ENCODE measurements at regions of chr20 and their contacts with region 1.

Region 1: DNA sequence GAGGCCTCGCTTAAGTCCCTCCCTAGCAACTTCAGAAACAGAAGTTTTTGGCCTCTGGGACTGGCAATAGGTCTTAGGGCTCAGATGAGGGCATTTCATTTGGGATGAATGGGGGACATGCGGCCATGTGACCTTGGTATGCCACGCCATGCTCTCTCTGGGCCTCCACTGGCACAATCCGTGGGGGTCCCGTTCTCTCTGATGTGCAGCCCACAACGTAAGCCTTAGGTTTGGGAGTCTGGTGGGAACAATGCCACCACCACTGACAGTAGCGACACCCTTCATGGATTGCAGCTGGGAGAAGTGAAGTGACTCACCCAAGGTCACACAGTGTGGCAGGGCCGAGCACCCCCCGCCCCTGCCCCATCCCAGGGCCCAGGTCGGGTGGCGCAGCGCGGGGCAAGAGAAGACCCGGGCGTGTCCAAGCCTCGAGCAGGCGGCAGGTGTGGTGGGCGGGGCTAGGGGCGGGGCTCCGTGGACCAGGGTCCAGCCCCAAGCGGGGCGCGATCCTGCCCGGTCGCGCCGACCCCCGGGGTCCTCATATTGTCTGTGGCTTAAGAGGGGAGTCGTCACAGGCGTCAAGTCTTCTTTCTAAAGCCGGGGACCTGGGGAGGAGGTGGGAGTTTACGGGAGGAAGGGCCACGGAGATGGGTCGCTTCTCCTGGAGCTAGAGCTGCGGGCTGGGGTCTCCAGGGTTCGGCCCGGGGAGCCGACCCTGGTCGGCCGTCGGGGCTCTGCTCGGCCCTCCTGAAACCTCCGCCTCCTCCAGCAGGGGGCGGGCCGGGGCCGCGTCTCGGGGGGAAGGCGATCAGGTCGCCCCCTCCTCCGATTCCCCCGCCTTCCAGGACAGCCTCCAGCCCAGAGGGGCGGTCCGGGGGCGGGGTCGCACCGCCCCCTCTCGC is 698 bp upstream of the CEBPB start:
- DNase-seq: peak; percentile 97
- H3K4me3 ChIP-seq: peak overlapping the region; percentile 79 to 91 (median 86)
- H3K27ac ChIP-seq: peak overlapping the region; percentile 93 to 100 (median 98)
- H3K4me1 ChIP-seq: peaks cover 0 to 40% (median 31%) of the 10 kb centered on the region in 4 donors
- H3K27me3 ChIP-seq: no peaks in the 10 kb centered on the region
- CTCF ChIP-seq: peak; percentile 68 to 89 (median 78)
- EP300 ChIP-seq: peak in 1 of 4 donors; percentile 5
- POLR2A ChIP-seq: no peak

Region 2: DNA sequence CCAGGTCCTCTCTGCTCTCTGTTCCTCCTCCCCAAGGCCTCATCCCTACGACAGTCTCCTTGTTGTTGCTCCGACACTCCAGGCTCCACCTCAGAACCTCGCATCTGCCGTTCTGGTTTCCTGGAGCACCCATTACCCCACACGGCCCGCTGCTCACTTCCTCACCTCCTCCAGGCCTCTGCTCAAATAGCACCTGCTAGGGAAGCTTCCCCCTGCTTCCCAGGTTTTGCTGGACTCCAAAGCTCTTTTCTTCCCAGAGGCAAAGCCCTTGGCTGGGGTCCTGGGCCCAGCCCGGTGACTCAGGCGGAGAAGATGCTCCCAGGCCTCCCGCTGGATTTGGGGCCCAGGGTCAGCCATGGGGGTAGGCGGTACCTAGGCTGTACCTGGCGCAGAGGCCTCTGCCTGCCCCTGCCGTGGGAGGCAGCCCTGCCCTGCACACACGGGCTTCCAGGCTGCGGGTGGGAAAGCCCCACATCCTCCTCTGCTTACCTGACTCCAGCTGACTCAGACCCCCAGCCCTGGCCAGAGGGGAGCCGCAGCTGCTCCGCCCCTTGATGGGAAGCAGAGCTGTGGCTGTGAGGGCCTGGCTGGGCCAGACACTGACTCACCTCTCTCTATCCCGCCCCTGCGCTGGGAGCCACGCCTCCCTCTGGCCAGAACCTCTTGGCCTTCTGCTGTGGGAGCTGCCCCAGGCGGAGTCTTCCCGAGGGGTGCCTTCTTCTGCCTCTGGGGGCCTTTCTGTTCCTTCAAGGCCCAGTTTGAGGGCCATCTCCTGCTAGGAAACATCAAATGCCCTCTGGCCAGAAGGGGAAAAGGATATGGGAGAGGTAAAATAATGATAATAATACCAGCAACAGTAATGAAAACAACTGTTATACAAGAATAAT is 131.2 kb after region 1 on chr20:
- intact Hi-C with region 1: loop called (anchors 5 kb)
- DNase-seq: peak; percentile 98
- H3K4me3 ChIP-seq: peak overlapping the region; percentile 13 to 48 (median 36)
- H3K27ac ChIP-seq: peak overlapping the region; percentile 77 to 92 (median 84)
- H3K4me1 ChIP-seq: peaks cover 0 to 25% (median 21%) of the 10 kb centered on the region in 4 donors
- H3K27me3 ChIP-seq: no peaks in the 10 kb centered on the region
- CTCF ChIP-seq: no peak
- EP300 ChIP-seq: peak in 1 of 4 donors; percentile 59
- POLR2A ChIP-seq: peak; percentile 33 to 76

Region 3: GRCh38 chr20:50415516-50416113 is 225.7 kb after region 1 on chr20:
- intact Hi-C with region 1: loop called (anchors 1 kb)
- DNase-seq: peak; percentile 100
- H3K4me3 ChIP-seq: peak overlapping the region in 1 of 4 donors; percentile 3
- H3K27ac ChIP-seq: peak overlapping the region; percentile 91 to 100 (median 96)
- H3K4me1 ChIP-seq: peaks cover 0 to 35% (median 27%) of the 10 kb centered on the region in 4 donors
- H3K27me3 ChIP-seq: no peaks in the 10 kb centered on the region
- CTCF ChIP-seq: no peak
- EP300 ChIP-seq: peak; percentile 99 to 100 (median 100)
- POLR2A ChIP-seq: peak; percentile 55 to 62

Region 4: DNA sequence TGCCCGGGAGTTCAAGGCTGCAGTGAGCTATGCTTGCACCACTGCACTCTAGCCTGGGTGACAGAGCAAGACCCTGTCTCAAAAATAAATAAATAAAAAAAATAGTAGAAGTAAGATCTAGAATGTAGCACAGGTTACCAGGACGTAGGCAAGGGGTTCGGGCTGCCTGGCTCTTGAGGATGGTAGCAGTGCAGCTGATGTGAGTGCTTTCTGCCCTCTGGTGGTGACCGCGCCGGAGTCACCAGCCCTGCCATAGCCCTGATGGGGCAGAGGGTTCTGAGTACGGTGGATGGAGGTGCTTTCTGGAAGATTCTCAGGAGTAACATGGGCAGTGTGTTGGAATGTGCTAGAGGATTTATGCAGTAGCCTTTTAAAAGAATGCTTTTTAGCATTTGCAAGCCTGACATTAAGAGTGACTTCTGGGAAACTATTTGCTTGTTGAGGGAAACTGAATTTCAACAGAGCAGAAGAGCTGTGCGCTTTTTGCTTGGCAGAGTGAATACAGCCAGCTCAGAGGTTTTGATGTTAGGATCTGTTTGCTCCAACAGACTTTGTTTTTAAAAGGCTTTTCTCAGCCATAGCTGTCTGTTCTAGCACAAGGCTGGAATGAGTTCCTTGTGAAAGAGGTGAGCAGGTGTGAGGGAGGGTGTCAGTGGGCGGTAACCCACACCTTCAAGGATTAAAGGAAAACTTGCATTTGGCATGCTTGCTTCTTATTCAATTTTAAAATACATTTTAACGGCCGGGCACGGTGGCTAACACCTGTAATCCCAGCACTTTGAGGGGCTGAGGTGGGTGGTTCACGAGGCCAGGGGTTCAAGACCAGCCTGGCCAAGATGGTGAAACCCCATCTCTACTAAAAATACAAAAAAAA is 386.2 kb after region 1 on chr20:
- intact Hi-C with region 1: loop called (anchors 2 kb)
- DNase-seq: peak; percentile 88
- H3K4me3 ChIP-seq: no peak overlapping the region
- H3K27ac ChIP-seq: peak overlapping the region; percentile 47 to 83 (median 78)
- H3K4me1 ChIP-seq: peaks cover 0 to 64% (median 40%) of the 10 kb centered on the region in 4 donors
- H3K27me3 ChIP-seq: no peaks in the 10 kb centered on the region
- CTCF ChIP-seq: peak; percentile 54 to 83 (median 74)
- EP300 ChIP-seq: no peak
- POLR2A ChIP-seq: no peak